ENCODE measurements at regions of chr1 and their contacts with region 1.

Region 1: GRCh38 chr1:212423879-212424278 is 8.8 kb upstream of the NENF start:
- DNase-seq: no peak
- ATAC-seq: no peak
- H3K4me3 ChIP-seq: no peak overlapping the region
- H3K27ac ChIP-seq: no peak overlapping the region
- H3K4me1 ChIP-seq: no peaks in the 10 kb centered on the region
- H3K27me3 ChIP-seq: peaks cover 21% of the 10 kb centered on the region
- CTCF ChIP-seq: no peak
- POLR2A ChIP-seq: no peak
- RAD21 ChIP-seq: no peak

Region 2: DNA sequence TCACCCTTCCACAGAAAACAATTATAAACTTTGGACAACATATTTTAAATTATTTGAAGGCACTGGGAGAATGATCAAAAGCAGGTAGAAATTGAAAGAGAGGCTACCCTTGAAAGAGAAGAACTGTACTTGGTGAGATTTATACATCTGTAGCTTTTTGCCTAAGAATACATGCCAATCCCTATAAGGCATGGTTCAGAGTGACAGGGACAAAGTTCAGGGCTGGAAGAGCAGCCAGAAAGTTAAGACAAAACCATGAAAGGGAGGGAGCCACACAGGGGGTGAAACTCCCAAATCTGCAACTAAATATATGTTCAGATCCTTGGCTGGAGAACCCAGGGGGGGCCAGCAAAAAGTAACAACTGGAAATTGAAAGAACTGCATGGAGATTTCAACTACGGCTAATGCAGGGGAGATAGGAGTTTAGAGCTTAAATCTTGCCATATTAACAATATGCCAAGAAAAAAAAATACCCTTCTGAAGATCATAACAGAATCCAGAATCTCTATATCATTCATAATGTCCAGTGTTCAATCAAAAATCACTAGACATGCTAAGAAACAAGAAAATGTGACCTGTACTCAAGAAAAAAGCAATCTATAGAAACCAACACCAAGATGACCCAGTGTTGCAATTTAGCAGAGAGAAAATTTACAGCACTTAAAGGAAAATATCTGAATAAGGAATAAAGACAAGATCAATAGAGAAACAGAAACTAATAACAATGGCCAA is 34.7 kb before region 1 on chr1:
- CTCF ChIA-PET with region 1: no interaction called
- POLR2A ChIA-PET with region 1: no interaction called
- dilution Hi-C with region 1: no loop called
- in situ Hi-C with region 1: no loop called
- intact Hi-C with region 1: loop called (anchors 2 kb)
- DNase-seq: no peak
- ATAC-seq: no peak
- H3K4me3 ChIP-seq: no peak overlapping the region
- H3K27ac ChIP-seq: no peak overlapping the region
- H3K4me1 ChIP-seq: no peaks in the 10 kb centered on the region
- H3K27me3 ChIP-seq: no peaks in the 10 kb centered on the region
- CTCF ChIP-seq: no peak
- POLR2A ChIP-seq: no peak
- RAD21 ChIP-seq: no peak